Activated CD4-positive, alpha-beta T cell treated with anti-CD3 and anti-CD28 coated beads, Interleukin-2, amount 10 ng/mL, durations not matched to agents 7 days and 5 days (primary cell): ENCODE measurements at regions of chr7 and their contacts with region 1.

Region 1: GRCh38 chr7:43582503-43583423 is at the start of gene STK17A:
- DNase-seq: peak; percentile 93
- H3K4me3 Mint-ChIP-seq: peak within 1 kb of the TSS; percentile 96
- H3K27ac Mint-ChIP-seq: peak within 1 kb of the TSS; percentile 99
- H3K4me1 Mint-ChIP-seq: peaks cover 31% of the 10 kb centered on the region
- H3K27me3 Mint-ChIP-seq: peaks cover 15% of the 10 kb centered on the region
- total RNA-seq, gene STK17A: 74.4 to 74.8 TPM

Region 2: GRCh38 chr7:43594020-43594419 is 11.3 kb after region 1 on chr7:
- CTCF ChIA-PET with region 1: interaction called, 17 read pairs
- POLR2A ChIA-PET with region 1: interaction called, 4 read pairs
- DNase-seq: no peak
- H3K4me3 Mint-ChIP-seq: peak overlapping the region; percentile 18
- H3K27ac Mint-ChIP-seq: peak overlapping the region; percentile 68
- H3K4me1 Mint-ChIP-seq: peaks cover 70% of the 10 kb centered on the region
- H3K27me3 Mint-ChIP-seq: no peaks in the 10 kb centered on the region

Region 3: GRCh38 chr7:43639858-43640491 is 57.2 kb after region 1 on chr7:
- CTCF ChIA-PET with region 1: interaction called, 16 read pairs
- POLR2A ChIA-PET with region 1: interaction called, 4 read pairs
- DNase-seq: no peak
- H3K4me3 Mint-ChIP-seq: no peak overlapping the region
- H3K27ac Mint-ChIP-seq: peak overlapping the region; percentile 39
- H3K4me1 Mint-ChIP-seq: peaks cover 82% of the 10 kb centered on the region
- H3K27me3 Mint-ChIP-seq: no peaks in the 10 kb centered on the region

Region 4: GRCh38 chr7:43686991-43687390 is 104.2 kb after region 1 on chr7:
- CTCF ChIA-PET with region 1: interaction called, 17 read pairs
- POLR2A ChIA-PET with region 1: no interaction called
- DNase-seq: no peak
- H3K4me3 Mint-ChIP-seq: no peak overlapping the region
- H3K27ac Mint-ChIP-seq: no peak overlapping the region
- H3K4me1 Mint-ChIP-seq: peaks cover 28% of the 10 kb centered on the region
- H3K27me3 Mint-ChIP-seq: no peaks in the 10 kb centered on the region

Region 5: GRCh38 chr7:43721193-43721806 is 138.5 kb after region 1 on chr7:
- CTCF ChIA-PET with region 1: interaction called, 33 read pairs
- POLR2A ChIA-PET with region 1: interaction called, 5 read pairs
- DNase-seq: peak; percentile 50
- H3K4me3 Mint-ChIP-seq: no peak overlapping the region
- H3K27ac Mint-ChIP-seq: no peak overlapping the region
- H3K4me1 Mint-ChIP-seq: peaks cover 26% of the 10 kb centered on the region
- H3K27me3 Mint-ChIP-seq: no peaks in the 10 kb centered on the region

Region 6: GRCh38 chr7:43844031-43844656 is 261.4 kb after region 1 on chr7:
- CTCF ChIA-PET with region 1: interaction called, 30 read pairs
- POLR2A ChIA-PET with region 1: no interaction called
- DNase-seq: no peak
- H3K4me3 Mint-ChIP-seq: no peak overlapping the region
- H3K27ac Mint-ChIP-seq: no peak overlapping the region
- H3K4me1 Mint-ChIP-seq: no peaks in the 10 kb centered on the region
- H3K27me3 Mint-ChIP-seq: peaks cover 4% of the 10 kb centered on the region